CD4-positive, alpha-beta T cell (primary cell): ENCODE measurements at regions of chr1 and their contacts with region 1.

Region 1: GRCh38 chr1:16155532-16156410 is at the start of gene EPHA2:
- DNase-seq: peak in 3 of 14 experiments; percentile 35 to 46 (median 41)
- ATAC-seq: no peak
- H3K4me3 ChIP-seq: peak within 1 kb of the TSS; percentile 57
- H3K4me3 Mint-ChIP-seq: peak within 1 kb of the TSS; percentile 81
- H3K27ac ChIP-seq: no peak within 1 kb of the TSS
- H3K27ac Mint-ChIP-seq: no peak within 1 kb of the TSS
- H3K4me1 ChIP-seq: peaks cover 78% of the 10 kb centered on the region
- H3K4me1 Mint-ChIP-seq: peaks cover 63% of the 10 kb centered on the region
- H3K27me3 ChIP-seq: peaks cover 14 to 16% of the 10 kb centered on the region in 2 experiments
- H3K27me3 Mint-ChIP-seq: peaks cover 3% of the 10 kb centered on the region
- CTCF ChIP-seq: no peak
- total RNA-seq, gene EPHA2: 0.22 TPM in 1 of 2 experiments, not detected in the other

Region 2: GRCh38 chr1:16167331-16168143 is 11.8 kb after region 1 on chr1:
- CTCF ChIA-PET with region 1: no interaction called
- POLR2A ChIA-PET with region 1: interaction called, 5 read pairs
- intact Hi-C with region 1: loop called in 1 of 2 experiments (anchors 1 kb)
- DNase-seq: peak; percentile 38 to 85 (median 60)
- ATAC-seq: peak; percentile 87
- H3K4me3 ChIP-seq: peak overlapping the region; percentile 55
- H3K4me3 Mint-ChIP-seq: peak overlapping the region; percentile 70
- H3K27ac ChIP-seq: no peak overlapping the region
- H3K27ac Mint-ChIP-seq: peak overlapping the region; percentile 16
- H3K4me1 ChIP-seq: peaks cover 62% of the 10 kb centered on the region
- H3K4me1 Mint-ChIP-seq: peaks cover 60% of the 10 kb centered on the region
- H3K27me3 ChIP-seq: no peaks in the 10 kb centered on the region
- H3K27me3 Mint-ChIP-seq: no peaks in the 10 kb centered on the region
- CTCF ChIP-seq: no peak

Region 3: DNA sequence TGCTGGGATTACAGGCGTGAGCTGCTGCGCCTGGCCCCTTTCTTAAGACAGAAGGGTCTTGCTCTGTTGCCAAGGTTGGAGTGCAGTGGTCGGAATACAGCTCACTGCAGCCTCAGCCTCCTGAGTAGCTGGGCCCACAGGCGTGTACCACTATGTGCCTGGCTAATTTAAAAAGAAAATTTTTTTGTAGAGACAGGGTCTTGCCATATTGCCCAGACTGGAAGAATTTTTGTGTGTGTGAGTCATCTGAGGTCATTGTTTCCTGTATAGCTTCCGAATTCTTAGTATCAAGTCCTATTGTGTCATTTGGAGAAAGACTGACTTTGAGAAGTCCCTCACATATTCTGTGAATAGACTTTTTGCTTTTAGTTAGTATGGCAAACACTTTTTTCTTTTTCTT is 216.0 kb after region 1 on chr1:
- CTCF ChIA-PET with region 1: no interaction called
- POLR2A ChIA-PET with region 1: no interaction called
- intact Hi-C with region 1: no loop called
- DNase-seq: peak in 3 of 14 experiments; percentile 42 to 59 (median 52)
- ATAC-seq: no peak
- H3K4me3 ChIP-seq: no peak overlapping the region
- H3K4me3 Mint-ChIP-seq: peak overlapping the region; percentile 68
- H3K27ac ChIP-seq: no peak overlapping the region
- H3K27ac Mint-ChIP-seq: peak overlapping the region; percentile 73
- H3K4me1 ChIP-seq: peaks cover 76% of the 10 kb centered on the region
- H3K4me1 Mint-ChIP-seq: peaks cover 74% of the 10 kb centered on the region
- H3K27me3 ChIP-seq: no peaks in the 10 kb centered on the region
- H3K27me3 Mint-ChIP-seq: no peaks in the 10 kb centered on the region
- CTCF ChIP-seq: no peak